ENCODE measurements at regions of chr1 and their contacts with region 1.

Region 1: DNA sequence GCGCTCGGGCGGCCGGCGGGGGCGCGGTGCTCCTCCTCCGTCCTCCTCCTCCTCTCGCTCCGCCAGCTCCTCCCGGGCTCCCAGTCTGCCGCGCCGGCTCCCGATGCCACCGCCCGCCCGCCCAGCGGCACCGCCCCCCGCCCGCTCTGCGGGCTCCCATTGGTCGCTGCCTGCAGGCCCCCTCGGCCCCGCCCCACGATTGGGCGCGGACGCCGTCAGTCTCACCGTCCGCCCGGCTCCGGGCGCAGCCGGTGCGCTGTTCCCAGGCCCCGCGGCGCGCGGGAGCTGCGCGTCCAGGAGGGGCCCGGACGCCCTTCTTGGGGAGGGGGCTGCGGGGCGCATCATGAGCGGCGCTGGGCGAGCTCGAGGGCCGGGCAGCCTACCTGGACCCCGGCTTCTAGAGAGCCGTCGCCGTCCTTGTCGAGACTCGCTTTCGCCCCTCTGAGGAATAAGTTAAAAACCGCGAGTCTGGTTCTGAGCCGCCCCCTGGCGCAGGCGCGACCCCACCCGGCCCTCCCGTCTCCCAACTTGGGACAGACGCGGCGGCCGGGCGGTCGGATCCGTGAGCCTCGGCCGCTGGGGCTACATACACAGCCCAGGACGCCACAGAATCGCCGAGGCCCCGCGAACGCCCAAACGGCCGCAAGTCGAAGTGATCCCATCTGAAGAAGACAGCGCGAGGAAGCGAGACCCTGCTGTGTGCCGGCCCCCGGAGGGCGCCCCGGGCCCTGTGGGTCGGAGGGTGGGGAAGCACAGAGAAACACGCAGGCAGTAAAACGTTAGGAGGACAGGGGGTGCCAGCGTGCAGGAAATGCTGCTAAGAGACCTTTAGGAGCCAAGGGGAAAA is at the start of gene SIPA1L2:
- DNase-seq: peak; percentile 88
- ATAC-seq: peak; percentile 96
- H3K4me3 ChIP-seq: peak within 1 kb of the TSS; percentile 78
- H3K27ac ChIP-seq: peak within 1 kb of the TSS; percentile 86
- H3K4me1 ChIP-seq: peaks cover 2% of the 10 kb centered on the region; the same call in 1 of the 2 replicates
- H3K27me3 ChIP-seq: no peaks in the 10 kb centered on the region; the same call in 1 of the 2 replicates
- CTCF ChIP-seq: peak; percentile 45
- POLR2A ChIP-seq: no peak
- RAD21 ChIP-seq: peak; percentile 45
- total RNA-seq, gene SIPA1L2: 11.9 and 13.4 TPM in 2 replicates

Region 2: GRCh38 chr1:231757101-231757404 is 873.2 kb before region 1 on chr1:
- CTCF ChIA-PET with region 1: no interaction called
- POLR2A ChIA-PET with region 1: no interaction called
- dilution Hi-C with region 1: no loop called
- in situ Hi-C with region 1: no loop called
- intact Hi-C with region 1: loop called (anchors 2 kb)
- DNase-seq: no peak
- ATAC-seq: peak; percentile 53
- H3K4me3 ChIP-seq: no peak overlapping the region
- H3K27ac ChIP-seq: no peak overlapping the region
- H3K4me1 ChIP-seq: no peaks in the 10 kb centered on the region
- H3K27me3 ChIP-seq: no peaks in the 10 kb centered on the region
- CTCF ChIP-seq: no peak
- POLR2A ChIP-seq: no peak
- RAD21 ChIP-seq: no peak

Region 3: GRCh38 chr1:231872461-231872910 is 757.8 kb before region 1 on chr1:
- CTCF ChIA-PET with region 1: interaction called, 3 read pairs
- POLR2A ChIA-PET with region 1: no interaction called
- dilution Hi-C with region 1: no loop called
- in situ Hi-C with region 1: loop called (anchors 5 kb)
- intact Hi-C with region 1: no loop called
- DNase-seq: peak; percentile 59
- ATAC-seq: peak; percentile 81
- H3K4me3 ChIP-seq: no peak overlapping the region
- H3K27ac ChIP-seq: no peak overlapping the region; the same call in 1 of the 2 replicates
- H3K4me1 ChIP-seq: peaks cover 9% of the 10 kb centered on the region
- H3K27me3 ChIP-seq: no peaks in the 10 kb centered on the region
- CTCF ChIP-seq: no peak
- POLR2A ChIP-seq: no peak
- RAD21 ChIP-seq: no peak

Region 4: GRCh38 chr1:232142403-232143314 is 487.6 kb before region 1 on chr1:
- CTCF ChIA-PET with region 1: no interaction called
- POLR2A ChIA-PET with region 1: no interaction called
- dilution Hi-C with region 1: no loop called
- in situ Hi-C with region 1: no loop called
- intact Hi-C with region 1: loop called (anchors 10 kb)
- DNase-seq: peak; percentile 82
- ATAC-seq: peak; percentile 90
- H3K4me3 ChIP-seq: no peak overlapping the region
- H3K27ac ChIP-seq: no peak overlapping the region
- H3K4me1 ChIP-seq: peaks cover 8% of the 10 kb centered on the region
- H3K27me3 ChIP-seq: no peaks in the 10 kb centered on the region
- CTCF ChIP-seq: no peak
- POLR2A ChIP-seq: no peak
- RAD21 ChIP-seq: no peak

Region 5: DNA sequence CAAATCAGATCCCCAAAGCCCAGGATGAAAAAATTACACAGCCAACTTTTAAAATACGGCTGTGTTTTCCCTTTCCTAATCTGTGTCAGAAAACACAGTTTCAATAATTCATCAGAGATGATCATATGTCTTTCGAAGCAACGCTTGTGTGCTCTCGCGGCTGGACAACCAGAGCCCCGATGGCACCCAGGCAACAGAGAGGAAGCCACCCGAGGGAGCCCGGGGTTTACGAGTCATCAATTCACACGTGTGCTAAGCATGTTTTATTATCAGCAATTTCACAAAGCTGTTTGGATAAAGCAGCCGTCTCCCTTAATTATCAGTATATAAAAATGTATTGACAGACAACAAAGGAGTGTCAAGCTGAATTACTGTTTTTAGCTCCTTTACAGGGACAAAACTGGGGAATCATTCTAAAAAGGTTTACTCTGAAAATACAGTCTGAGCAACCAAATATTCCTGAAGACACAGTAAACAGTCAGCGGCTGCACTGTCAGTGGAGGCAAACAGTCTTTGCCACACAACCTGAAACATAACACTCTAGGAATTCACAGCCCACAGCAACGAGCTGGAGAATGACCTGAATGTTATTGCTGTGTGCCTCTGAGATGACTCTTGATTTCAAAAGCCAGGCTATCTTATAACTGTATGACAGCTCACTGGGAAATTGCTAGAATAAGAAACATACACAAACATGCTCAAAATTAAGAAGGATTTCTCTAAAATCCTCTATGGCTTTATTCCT is 201.3 kb before region 1 on chr1:
- CTCF ChIA-PET with region 1: no interaction called
- POLR2A ChIA-PET with region 1: no interaction called
- dilution Hi-C with region 1: no loop called
- in situ Hi-C with region 1: no loop called
- intact Hi-C with region 1: loop called (anchors 5 kb)
- DNase-seq: peak; percentile 89
- ATAC-seq: peak; percentile 96
- H3K4me3 ChIP-seq: no peak overlapping the region
- H3K27ac ChIP-seq: 0 out of 2 replicates have a peak overlapping the region, but pooled peaks have one; percentile 8
- H3K4me1 ChIP-seq: peaks cover 11% of the 10 kb centered on the region
- H3K27me3 ChIP-seq: no peaks in the 10 kb centered on the region
- CTCF ChIP-seq: no peak
- POLR2A ChIP-seq: no peak
- RAD21 ChIP-seq: no peak

Region 6: GRCh38 chr1:232669981-232670747 is 39.9 kb after region 1 on chr1:
- CTCF ChIA-PET with region 1: no interaction called
- POLR2A ChIA-PET with region 1: no interaction called
- dilution Hi-C with region 1: no loop called
- in situ Hi-C with region 1: no loop called
- intact Hi-C with region 1: no loop called
- DNase-seq: peak; percentile 61
- ATAC-seq: no peak
- H3K4me3 ChIP-seq: no peak overlapping the region
- H3K27ac ChIP-seq: no peak overlapping the region
- H3K4me1 ChIP-seq: peaks cover 2% of the 10 kb centered on the region; the same call in 1 of the 2 replicates
- H3K27me3 ChIP-seq: no peaks in the 10 kb centered on the region; the same call in 1 of the 2 replicates
- CTCF ChIP-seq: no peak
- POLR2A ChIP-seq: no peak
- RAD21 ChIP-seq: no peak

Region 7: GRCh38 chr1:232891071-232891470 is 260.8 kb after region 1 on chr1:
- CTCF ChIA-PET with region 1: no interaction called
- POLR2A ChIA-PET with region 1: no interaction called
- dilution Hi-C with region 1: no loop called
- in situ Hi-C with region 1: no loop called
- intact Hi-C with region 1: loop called (anchors 10 kb)
- DNase-seq: peak; percentile 81
- ATAC-seq: peak; percentile 99
- H3K4me3 ChIP-seq: no peak overlapping the region
- H3K27ac ChIP-seq: no peak overlapping the region; the same call in 1 of the 2 replicates
- H3K4me1 ChIP-seq: peaks cover 7% of the 10 kb centered on the region
- H3K27me3 ChIP-seq: peaks cover 5% of the 10 kb centered on the region; the same call in 1 of the 2 replicates
- CTCF ChIP-seq: no peak
- POLR2A ChIP-seq: no peak
- RAD21 ChIP-seq: no peak

Region 8: GRCh38 chr1:233025157-233025915 is 395.1 kb after region 1 on chr1:
- CTCF ChIA-PET with region 1: no interaction called
- POLR2A ChIA-PET with region 1: no interaction called
- dilution Hi-C with region 1: no loop called
- in situ Hi-C with region 1: no loop called
- intact Hi-C with region 1: loop called (anchors 2 kb)
- DNase-seq: peak; percentile 30
- ATAC-seq: no peak; the same call in 1 of the 2 replicates
- H3K4me3 ChIP-seq: no peak overlapping the region
- H3K27ac ChIP-seq: no peak overlapping the region
- H3K4me1 ChIP-seq: peaks cover 9% of the 10 kb centered on the region; the same call in 1 of the 2 replicates
- H3K27me3 ChIP-seq: no peaks in the 10 kb centered on the region
- CTCF ChIP-seq: peak; percentile 30; the same call in 1 of the 2 replicates
- POLR2A ChIP-seq: no peak
- RAD21 ChIP-seq: peak; percentile 37

Measured in IMR-90 (cell line).